ENCODE measurements at regions of chr1 and their contacts with region 1.

Region 1: DNA sequence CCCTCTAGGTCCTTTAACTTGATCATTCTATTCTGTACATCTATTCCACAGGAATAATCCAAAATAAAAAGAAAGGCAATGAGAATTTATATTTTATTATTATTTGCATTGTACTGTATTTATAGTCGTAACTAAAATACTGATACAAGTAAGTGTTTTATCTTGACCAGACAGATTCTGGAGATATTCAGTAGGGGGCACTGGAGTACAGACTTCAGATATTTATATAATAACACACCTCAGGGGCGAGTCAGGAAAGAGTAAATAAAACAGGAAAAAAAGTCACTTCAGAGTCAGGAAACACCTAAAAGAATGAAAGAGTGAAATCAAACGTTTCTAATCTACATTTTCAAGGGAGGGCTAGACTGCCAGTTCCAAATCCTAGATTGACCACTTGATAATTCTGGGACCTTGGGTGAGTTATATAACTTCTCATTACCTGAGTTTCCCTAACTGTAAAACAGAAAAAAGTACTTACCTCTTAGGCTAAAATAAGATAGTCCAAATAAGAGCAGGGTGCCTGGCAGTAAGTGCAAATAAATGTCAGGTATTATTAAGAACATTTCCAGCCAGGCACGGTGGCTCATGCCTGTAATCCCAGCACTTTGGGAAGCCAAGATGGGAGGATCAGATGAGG is 31.1 kb upstream of the MTF1 start:
- DNase-seq: peak; percentile 20
- H3K4me3 ChIP-seq: no peak overlapping the region
- H3K27ac ChIP-seq: no peak overlapping the region
- H3K4me1 ChIP-seq: no peaks in the 10 kb centered on the region
- H3K27me3 ChIP-seq: no peaks in the 10 kb centered on the region
- CTCF ChIP-seq: peak; percentile 57

Region 2: DNA sequence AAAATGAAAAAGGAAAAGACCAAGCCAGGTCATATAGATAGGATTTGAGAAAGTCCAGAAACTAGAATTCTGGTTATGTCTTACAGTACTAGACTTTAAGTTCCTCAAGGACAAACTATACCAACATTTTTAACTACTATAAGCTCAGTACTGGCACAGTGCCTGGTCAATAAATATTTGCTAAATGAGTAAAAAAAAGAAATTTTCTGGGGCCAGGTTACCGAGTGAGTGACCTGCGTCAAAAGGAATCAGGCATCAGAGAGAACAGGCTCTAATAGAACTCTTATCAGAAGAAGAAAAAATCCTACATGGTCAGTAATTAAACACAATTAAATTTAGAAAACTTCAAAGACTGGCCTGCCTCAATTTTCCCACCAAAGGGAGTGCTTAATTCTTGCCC is 58.7 kb before region 1 on chr1:
- intact Hi-C with region 1: no loop called
- DNase-seq: no peak
- H3K4me3 ChIP-seq: no peak overlapping the region
- H3K27ac ChIP-seq: no peak overlapping the region
- H3K4me1 ChIP-seq: no peaks in the 10 kb centered on the region
- H3K27me3 ChIP-seq: no peaks in the 10 kb centered on the region
- CTCF ChIP-seq: no peak

Region 3: GRCh38 chr1:37978541-37978940 is 88.0 kb after region 1 on chr1:
- intact Hi-C with region 1: loop called (anchors 5 kb)
- DNase-seq: no peak
- H3K4me3 ChIP-seq: no peak overlapping the region
- H3K27ac ChIP-seq: no peak overlapping the region
- H3K4me1 ChIP-seq: no peaks in the 10 kb centered on the region
- H3K27me3 ChIP-seq: no peaks in the 10 kb centered on the region
- CTCF ChIP-seq: no peak

Measured in colonic mucosa (tissue), 4 donors.